Naive thymus-derived CD4-positive, alpha-beta T cell (primary cell): ENCODE measurements at regions of chr14 and their contacts with region 1.

Region 1: DNA sequence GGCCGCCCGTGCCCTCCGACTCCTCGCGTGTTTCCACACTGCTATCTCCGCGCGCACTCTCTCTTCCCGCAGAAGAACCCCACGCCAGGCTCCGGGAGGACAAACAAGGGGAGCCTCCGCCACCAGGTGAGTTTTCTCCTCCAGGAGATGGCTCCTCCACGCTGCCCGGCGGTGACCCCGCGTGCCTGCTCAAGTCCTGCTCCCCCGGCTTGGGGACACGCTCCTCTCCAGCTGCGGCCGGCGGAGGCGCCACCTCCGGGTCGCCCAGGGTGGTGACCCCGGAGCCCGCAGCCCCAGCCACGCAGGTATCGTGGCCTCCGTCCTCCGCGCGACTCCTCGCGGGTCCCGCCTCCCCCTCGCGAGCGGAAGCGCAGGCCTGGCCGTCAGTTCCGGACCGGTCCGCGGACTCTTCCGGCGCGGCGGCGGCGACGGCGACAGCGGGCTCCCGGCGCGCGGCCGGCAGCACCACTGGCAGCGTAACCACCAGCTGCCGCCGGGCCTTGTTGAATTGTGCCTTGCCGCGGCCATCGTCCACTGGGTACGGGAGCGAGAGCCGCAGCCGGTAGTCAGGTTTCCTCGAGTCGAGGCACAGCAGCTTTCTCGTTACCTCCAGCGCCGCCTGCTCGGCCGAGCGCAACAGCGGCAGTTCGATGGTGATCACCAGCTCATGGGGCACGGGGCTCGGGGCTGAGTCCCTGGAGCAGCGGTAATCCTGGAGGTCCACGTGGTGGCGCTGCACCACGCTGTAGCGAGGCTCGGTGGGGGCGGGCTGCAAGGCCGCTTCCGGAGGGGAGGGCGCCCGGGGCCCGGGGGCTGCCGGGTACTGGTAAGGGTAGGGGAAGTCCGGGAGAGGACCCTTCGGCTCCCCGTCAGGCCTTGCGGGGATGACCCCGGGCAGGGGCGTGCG is 1.2 kb downstream of the DNAAF2 start:
- DNase-seq: peak; percentile 89 to 96 (median 93)
- ATAC-seq: peak; percentile 92
- H3K4me3 ChIP-seq: peak overlapping the region; percentile 99
- H3K4me3 Mint-ChIP-seq: peak overlapping the region; percentile 81 to 99 (median 96)
- H3K27ac ChIP-seq: peak overlapping the region; percentile 96
- H3K27ac Mint-ChIP-seq: peak overlapping the region; percentile 71 to 96 (median 90)
- H3K4me1 ChIP-seq: peaks cover 19 to 29% of the 10 kb centered on the region in 2 donors
- H3K4me1 Mint-ChIP-seq: peaks cover 35 to 71% (median 52%) of the 10 kb centered on the region in 7 donors
- H3K27me3 ChIP-seq: no peaks in the 10 kb centered on the region
- H3K27me3 Mint-ChIP-seq: no peaks in the 10 kb centered on the region

Region 2: GRCh38 chr14:49598485-49599300 is 35.2 kb before region 1 on chr14 and contains the start of gene LRR1:
- CTCF ChIA-PET with region 1: no interaction called
- POLR2A ChIA-PET with region 1: interaction called, 19 read pairs
- intact Hi-C with region 1: loop called (anchors 1 kb)
- DNase-seq: peak; percentile 74 to 91 (median 84)
- ATAC-seq: peak; percentile 93
- H3K4me3 ChIP-seq: peak within 1 kb of the TSS; percentile 94
- H3K4me3 Mint-ChIP-seq: peak within 1 kb of the TSS; percentile 91 to 100 (median 98)
- H3K27ac ChIP-seq: peak within 1 kb of the TSS; percentile 92
- H3K27ac Mint-ChIP-seq: peak within 1 kb of the TSS; percentile 95 to 99 (median 98)
- H3K4me1 ChIP-seq: peaks cover 0 to 5% of the 10 kb centered on the region in 2 donors
- H3K4me1 Mint-ChIP-seq: peaks cover 5 to 46% (median 37%) of the 10 kb centered on the region in 7 donors
- H3K27me3 ChIP-seq: no peaks in the 10 kb centered on the region
- H3K27me3 Mint-ChIP-seq: no peaks in the 10 kb centered on the region
- total RNA-seq, gene LRR1: 7.5 to 39.7 (median 13.3) TPM

Region 3: DNA sequence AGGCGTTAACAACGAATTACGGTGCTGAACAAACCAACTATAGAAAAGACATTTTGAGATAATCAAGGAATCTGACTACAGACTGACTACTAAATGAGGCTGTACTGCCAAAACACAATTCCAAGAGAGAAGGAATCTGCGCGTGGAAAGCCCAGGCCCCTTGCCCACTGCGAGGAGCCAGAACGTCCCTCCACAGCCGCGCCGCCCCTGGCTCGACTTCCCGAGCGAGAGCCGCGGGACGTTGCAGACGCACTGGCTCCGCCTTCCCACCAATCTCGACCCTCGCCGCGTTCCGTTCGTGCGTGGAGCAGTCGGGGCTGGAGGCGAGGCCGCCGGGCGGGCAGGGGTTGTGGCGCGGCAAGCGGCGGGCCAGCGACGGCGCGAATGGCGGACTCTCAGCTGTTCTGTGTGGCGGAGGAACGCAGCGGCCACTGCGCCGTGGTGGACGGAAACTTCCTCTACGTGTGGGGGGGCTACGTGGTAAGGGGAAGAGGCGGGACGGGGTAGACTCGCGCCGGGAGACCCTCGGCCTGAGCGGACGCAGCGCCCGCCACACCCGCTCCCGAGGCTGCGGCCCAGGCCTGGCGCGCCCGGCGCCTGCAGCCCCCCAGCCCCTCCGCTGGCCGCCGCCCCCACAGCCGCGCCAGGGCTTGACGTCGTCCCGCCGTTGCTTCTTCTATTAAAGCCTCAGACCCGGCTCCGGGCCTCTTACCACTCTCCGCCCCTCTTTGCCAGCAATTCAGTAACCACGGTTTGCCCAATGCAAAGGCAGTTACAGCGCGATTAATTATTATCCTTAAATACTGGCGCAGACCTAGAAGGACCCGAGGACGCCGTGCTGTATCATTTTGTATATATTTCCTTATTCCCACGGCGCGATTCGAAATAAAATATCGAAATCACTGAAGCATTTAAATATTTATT is 59.2 kb after region 1 on chr14 and contains the start of gene KLHDC1:
- CTCF ChIA-PET with region 1: interaction called, 4 read pairs
- POLR2A ChIA-PET with region 1: interaction called, 25 read pairs
- intact Hi-C with region 1: loop called (anchors 1 kb)
- DNase-seq: peak; percentile 70 to 84 (median 80)
- ATAC-seq: peak; percentile 89
- H3K4me3 ChIP-seq: peak within 1 kb of the TSS; percentile 67
- H3K4me3 Mint-ChIP-seq: peak within 1 kb of the TSS; percentile 81 to 100 (median 89)
- H3K27ac ChIP-seq: peak within 1 kb of the TSS; percentile 80
- H3K27ac Mint-ChIP-seq: peak within 1 kb of the TSS; percentile 79 to 99 (median 94)
- H3K4me1 ChIP-seq: peaks cover 8 to 19% of the 10 kb centered on the region in 2 donors
- H3K4me1 Mint-ChIP-seq: peaks cover 20 to 52% (median 43%) of the 10 kb centered on the region in 7 donors
- H3K27me3 ChIP-seq: no peaks in the 10 kb centered on the region
- H3K27me3 Mint-ChIP-seq: no peaks in the 10 kb centered on the region
- total RNA-seq, gene KLHDC1: 2.6 to 18.0 (median 12.2) TPM

Region 4: GRCh38 chr14:49828640-49829039 is 194.7 kb after region 1 on chr14:
- CTCF ChIA-PET with region 1: interaction called, 13 read pairs
- POLR2A ChIA-PET with region 1: interaction called, 16 read pairs
- intact Hi-C with region 1: loop called (anchors 1 kb)
- DNase-seq: no peak
- ATAC-seq: no peak
- H3K4me3 ChIP-seq: no peak overlapping the region
- H3K4me3 Mint-ChIP-seq: no peak overlapping the region
- H3K27ac ChIP-seq: no peak overlapping the region
- H3K27ac Mint-ChIP-seq: peak overlapping the region in 1 of 9 donors; percentile 65
- H3K4me1 ChIP-seq: no peaks in the 10 kb centered on the region
- H3K4me1 Mint-ChIP-seq: peaks cover 0 to 24% (median 10%) of the 10 kb centered on the region in 7 donors
- H3K27me3 ChIP-seq: no peaks in the 10 kb centered on the region
- H3K27me3 Mint-ChIP-seq: no peaks in the 10 kb centered on the region

Region 5: DNA sequence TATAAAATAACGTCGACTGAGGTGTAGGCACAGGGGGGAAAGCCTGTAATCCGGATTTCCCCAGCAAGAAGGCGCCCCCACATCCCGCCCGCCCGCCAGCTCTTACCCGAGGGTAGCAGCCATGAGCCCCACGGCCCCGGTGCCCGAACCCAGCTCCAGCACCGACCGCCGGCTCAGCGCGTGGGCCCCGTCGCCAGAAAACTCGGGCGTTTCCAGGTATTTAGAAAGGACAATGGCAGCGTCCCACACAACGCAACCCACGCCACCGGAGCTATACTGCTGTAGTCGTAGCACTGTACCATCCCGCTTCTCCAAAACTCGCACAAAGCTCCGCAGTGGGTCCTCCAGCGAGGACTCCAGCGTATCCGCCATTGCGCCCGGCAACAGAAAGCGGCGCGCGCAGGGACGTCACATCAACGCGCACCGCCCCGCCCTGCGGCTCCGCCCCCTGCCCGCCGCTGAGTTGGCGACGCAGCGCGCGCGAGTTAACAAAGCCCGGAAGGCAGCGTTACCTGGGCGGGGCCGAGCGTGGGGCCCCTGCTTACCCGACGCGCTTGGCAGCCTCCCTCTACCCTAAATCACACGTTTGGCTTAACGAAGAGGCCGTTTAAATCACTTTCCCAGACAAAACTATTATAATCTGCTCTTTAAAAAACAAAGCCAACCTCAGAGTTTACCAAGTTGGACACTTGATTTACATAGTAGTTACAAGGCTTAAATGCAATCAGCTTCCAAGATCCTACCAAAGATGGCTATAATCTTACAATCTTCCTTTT is 482.5 kb after region 1 on chr14 and contains the start of gene VCPKMT:
- CTCF ChIA-PET with region 1: no interaction called
- POLR2A ChIA-PET with region 1: interaction called, 4 read pairs
- intact Hi-C with region 1: loop called (anchors 1 to 2 kb)
- DNase-seq: peak; percentile 93 to 97 (median 97)
- ATAC-seq: peak; percentile 99
- H3K4me3 ChIP-seq: peak within 1 kb of the TSS; percentile 74
- H3K4me3 Mint-ChIP-seq: peak within 1 kb of the TSS; percentile 92 to 98 (median 96)
- H3K27ac ChIP-seq: peak within 1 kb of the TSS; percentile 94
- H3K27ac Mint-ChIP-seq: peak within 1 kb of the TSS; percentile 97 to 99 (median 98)
- H3K4me1 ChIP-seq: peaks cover 18 to 20% of the 10 kb centered on the region in 2 donors
- H3K4me1 Mint-ChIP-seq: peaks cover 11 to 37% (median 23%) of the 10 kb centered on the region in 7 donors
- H3K27me3 ChIP-seq: no peaks in the 10 kb centered on the region
- H3K27me3 Mint-ChIP-seq: no peaks in the 10 kb centered on the region
- total RNA-seq, gene VCPKMT: 10.3 to 25.9 (median 17.4) TPM